HepG2 (cell line): ENCODE measurements at regions of chr22 and their contacts with region 1.

Region 1: DNA sequence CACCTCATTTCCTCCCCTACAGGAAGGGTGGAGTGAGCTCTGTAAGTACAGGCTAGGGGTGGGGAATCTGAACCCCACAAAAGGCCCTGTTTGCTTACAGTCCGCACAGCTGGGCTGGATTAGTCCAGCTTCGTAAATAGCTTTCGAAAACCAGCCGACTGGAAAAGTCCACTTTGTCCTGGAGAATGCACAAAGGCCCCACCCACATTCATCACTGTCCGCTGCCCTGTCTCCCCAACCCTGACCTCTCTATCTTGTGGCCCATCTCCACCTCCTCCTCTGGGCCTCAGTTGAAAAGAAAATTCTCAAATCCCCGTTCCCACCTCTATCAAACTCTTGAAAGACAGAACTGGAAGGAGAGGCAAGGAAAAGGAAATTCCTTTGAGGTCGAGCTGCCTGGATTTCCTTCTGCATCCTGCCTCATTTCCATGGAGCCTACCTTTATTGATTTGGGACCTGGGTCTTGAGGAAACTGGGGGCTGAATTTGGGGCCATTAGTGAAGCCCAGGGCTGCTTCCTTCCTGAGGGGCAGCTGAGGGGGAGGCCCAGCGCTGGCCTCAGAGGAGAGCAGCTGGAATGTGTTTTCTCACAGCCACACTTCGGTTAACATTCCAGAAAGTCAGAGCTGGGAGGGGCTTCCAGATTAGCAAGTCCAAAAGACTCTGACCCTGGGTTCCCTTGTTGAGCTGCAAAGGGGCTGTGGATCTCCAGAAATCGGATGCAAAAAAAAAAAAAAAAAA is 147.6 kb downstream of the FBXO7 start:
- DNase-seq: peak; percentile 89
- ATAC-seq: peak; percentile 80
- H3K4me3 ChIP-seq: peak overlapping the region; percentile 43 to 60 (median 50)
- H3K27ac ChIP-seq: peak overlapping the region; percentile 92
- H3K4me1 ChIP-seq: peaks cover 99% of the 10 kb centered on the region
- H3K27me3 ChIP-seq: no peaks in the 10 kb centered on the region
- CTCF ChIP-seq: no peak
- EP300 ChIP-seq: peak in 1 of 2 experiments; percentile 71; a peak in 2 of 4 replicates
- POLR2A ChIP-seq: peak in 1 of 2 experiments; percentile 49; a peak in 1 of 4 replicates
- RAD21 ChIP-seq: no peak

Region 2: GRCh38 chr22:32534252-32535240 is 87.6 kb before region 1 on chr22:
- CTCF ChIA-PET with region 1: no interaction called
- POLR2A ChIA-PET with region 1: interaction called, 145 read pairs
- in situ Hi-C with region 1: loop called (anchors 5 kb)
- intact Hi-C with region 1: loop called (anchors 2 kb)
- DNase-seq: peak; percentile 87
- ATAC-seq: peak; percentile 37
- H3K4me3 ChIP-seq: peak overlapping the region; percentile 31 to 72 (median 40); a peak in 5 of 6 replicates
- H3K27ac ChIP-seq: peak overlapping the region; percentile 78
- H3K4me1 ChIP-seq: peaks cover 91% of the 10 kb centered on the region
- H3K27me3 ChIP-seq: no peaks in the 10 kb centered on the region
- CTCF ChIP-seq: peak; percentile 34; the same call in 1 of the 2 replicates
- EP300 ChIP-seq: peak in 1 of 2 experiments; percentile 66; a peak in 1 of 4 replicates
- POLR2A ChIP-seq: peak in 1 of 2 experiments; percentile 55; a peak in 2 of 4 replicates
- RAD21 ChIP-seq: no peak

Region 3: DNA sequence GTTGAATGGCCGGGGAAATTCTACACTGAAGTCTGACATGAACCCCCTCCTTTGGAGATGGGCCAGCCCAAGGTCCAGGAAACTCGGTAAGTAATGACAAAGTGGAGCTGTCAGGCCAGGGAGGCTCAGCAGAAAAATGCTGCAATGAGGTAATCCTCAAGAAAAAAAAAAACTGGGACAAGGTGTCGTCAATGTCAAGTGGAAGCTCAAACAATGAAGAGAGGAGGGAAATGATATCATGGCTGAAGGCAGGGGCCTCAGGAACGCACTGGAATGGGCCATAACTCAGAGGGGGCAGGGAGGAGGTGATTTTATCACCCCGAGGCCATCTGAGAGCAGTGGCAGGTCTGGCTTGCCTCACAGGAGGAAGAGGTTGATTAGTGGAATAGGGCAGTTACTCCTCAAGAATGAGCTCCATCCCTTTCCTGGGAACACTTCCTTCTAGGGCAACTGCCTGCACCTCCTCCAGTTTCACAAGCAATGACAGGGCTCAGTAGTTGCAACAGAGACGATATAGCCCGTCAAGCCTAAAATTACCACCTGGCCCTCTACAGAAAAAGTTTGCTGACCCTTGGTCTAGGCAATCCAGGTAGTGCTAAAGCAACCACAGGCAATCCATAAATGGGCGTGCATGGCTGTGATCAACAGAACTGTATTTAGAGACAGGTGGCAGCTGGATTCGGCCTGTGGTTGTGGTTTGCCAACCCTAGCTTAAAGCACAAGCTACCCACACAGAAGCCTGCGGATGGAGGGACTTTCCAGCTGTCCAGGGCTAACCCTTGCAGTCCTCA is 82.3 kb before region 1 on chr22:
- CTCF ChIA-PET with region 1: no interaction called
- POLR2A ChIA-PET with region 1: interaction called, 145 read pairs
- in situ Hi-C with region 1: loop called (anchors 5 kb)
- intact Hi-C with region 1: loop called (anchors 2 kb)
- DNase-seq: no peak
- ATAC-seq: peak; percentile 46
- H3K4me3 ChIP-seq: no peak overlapping the region
- H3K27ac ChIP-seq: no peak overlapping the region
- H3K4me1 ChIP-seq: peaks cover 50% of the 10 kb centered on the region
- H3K27me3 ChIP-seq: no peaks in the 10 kb centered on the region
- CTCF ChIP-seq: no peak
- EP300 ChIP-seq: no peak
- POLR2A ChIP-seq: no peak
- RAD21 ChIP-seq: no peak

Region 4: DNA sequence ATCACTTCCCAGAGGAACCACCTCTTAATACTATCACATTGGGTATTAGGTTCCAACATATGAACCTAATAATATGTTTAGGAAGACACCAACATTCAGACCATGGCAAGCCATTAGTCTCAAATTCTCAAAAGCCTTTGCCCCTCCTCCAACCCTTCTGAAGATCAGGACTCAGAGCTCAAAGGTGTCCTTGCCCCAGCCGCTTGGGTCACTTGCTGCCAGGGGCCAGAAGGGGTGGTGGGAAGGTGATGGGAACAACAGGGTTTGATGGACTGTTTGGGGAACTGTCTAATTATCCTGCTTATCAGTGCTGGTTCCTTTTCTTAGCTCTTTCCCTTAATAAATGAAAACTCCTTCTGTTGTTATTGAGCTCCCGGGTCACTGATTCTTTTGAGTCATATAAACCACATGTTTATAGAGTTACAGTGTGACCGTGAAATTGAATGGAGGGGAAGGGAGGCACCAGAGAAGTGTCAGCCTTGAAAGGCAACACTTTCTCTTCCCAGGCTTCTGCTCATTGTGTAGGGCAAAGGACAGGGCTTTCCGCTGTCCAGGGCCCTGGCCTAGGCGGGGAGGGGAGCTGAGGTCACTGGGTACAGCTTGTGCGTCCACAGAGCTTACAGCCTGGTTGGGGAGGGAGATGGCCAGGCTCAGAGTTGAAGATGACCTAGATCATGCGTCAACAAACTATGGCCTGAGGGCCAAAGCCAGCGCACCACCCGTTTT is 42.5 kb before region 1 on chr22:
- CTCF ChIA-PET with region 1: no interaction called
- POLR2A ChIA-PET with region 1: interaction called, 33 read pairs
- in situ Hi-C with region 1: no loop called
- intact Hi-C with region 1: no loop called
- DNase-seq: peak; percentile 50
- ATAC-seq: peak; percentile 85
- H3K4me3 ChIP-seq: no peak overlapping the region
- H3K27ac ChIP-seq: peak overlapping the region; percentile 43
- H3K4me1 ChIP-seq: peaks cover 62% of the 10 kb centered on the region
- H3K27me3 ChIP-seq: no peaks in the 10 kb centered on the region
- CTCF ChIP-seq: no peak
- EP300 ChIP-seq: 0 out of 4 replicates have a peak, but pooled peaks of 1 of the 2 experiments have one; percentile 20
- POLR2A ChIP-seq: no peak
- RAD21 ChIP-seq: no peak

Region 5: DNA sequence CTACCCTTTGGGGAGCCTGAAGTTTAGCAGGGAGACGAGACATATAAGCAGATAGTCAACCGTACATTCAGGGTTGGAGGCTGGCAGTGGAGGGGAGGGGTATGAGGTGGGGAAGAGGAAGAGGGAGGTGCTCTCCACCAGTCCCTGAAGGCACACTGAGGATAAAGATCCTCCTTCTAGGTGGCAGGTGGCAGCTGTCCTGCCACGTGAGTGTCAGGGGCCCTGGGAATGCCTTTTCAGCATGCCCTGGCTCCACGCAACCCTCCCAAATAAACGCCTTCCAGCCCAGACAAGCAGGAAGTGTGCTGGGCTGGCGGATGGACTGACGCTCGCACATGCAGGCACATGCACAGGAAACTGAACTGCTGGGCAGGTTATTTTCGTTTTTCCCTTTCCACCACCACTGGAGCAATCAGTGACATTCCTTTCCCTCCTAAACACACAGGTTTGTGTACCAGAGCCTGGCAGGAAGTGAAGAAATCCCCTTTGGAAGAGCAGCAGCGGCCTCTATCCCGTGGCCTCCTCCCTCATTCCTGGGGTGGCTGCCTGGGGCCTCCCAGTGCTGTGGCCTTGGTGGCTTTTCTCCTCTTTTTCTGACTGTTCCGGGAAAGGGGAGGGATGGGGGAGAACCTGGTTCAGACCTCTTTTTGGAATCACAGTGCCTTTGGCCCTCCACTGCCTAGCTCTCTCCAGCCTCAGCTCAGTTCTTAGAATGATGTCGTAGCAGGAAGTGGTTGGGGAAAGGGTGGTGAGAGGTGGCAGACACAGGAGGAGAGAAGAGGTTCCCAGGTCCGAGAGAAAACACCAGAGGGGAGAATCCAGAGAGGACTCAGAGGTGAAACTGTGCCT is 22.3 kb after region 1 on chr22:
- CTCF ChIA-PET with region 1: no interaction called
- POLR2A ChIA-PET with region 1: interaction called, 11 read pairs
- in situ Hi-C with region 1: no loop called
- intact Hi-C with region 1: no loop called
- DNase-seq: peak; percentile 98
- ATAC-seq: peak; percentile 98
- H3K4me3 ChIP-seq: peak overlapping the region in 2 of 3 experiments; percentile 37 to 61; a peak in 5 of 6 replicates
- H3K27ac ChIP-seq: peak overlapping the region; percentile 94
- H3K4me1 ChIP-seq: peaks cover 30% of the 10 kb centered on the region
- H3K27me3 ChIP-seq: no peaks in the 10 kb centered on the region
- CTCF ChIP-seq: peak; percentile 74
- EP300 ChIP-seq: peak in 1 of 2 experiments; percentile 90; a peak in 2 of 4 replicates
- POLR2A ChIP-seq: peak; percentile 71 to 73
- RAD21 ChIP-seq: peak; percentile 52; the same call in 1 of the 2 replicates

Region 6: DNA sequence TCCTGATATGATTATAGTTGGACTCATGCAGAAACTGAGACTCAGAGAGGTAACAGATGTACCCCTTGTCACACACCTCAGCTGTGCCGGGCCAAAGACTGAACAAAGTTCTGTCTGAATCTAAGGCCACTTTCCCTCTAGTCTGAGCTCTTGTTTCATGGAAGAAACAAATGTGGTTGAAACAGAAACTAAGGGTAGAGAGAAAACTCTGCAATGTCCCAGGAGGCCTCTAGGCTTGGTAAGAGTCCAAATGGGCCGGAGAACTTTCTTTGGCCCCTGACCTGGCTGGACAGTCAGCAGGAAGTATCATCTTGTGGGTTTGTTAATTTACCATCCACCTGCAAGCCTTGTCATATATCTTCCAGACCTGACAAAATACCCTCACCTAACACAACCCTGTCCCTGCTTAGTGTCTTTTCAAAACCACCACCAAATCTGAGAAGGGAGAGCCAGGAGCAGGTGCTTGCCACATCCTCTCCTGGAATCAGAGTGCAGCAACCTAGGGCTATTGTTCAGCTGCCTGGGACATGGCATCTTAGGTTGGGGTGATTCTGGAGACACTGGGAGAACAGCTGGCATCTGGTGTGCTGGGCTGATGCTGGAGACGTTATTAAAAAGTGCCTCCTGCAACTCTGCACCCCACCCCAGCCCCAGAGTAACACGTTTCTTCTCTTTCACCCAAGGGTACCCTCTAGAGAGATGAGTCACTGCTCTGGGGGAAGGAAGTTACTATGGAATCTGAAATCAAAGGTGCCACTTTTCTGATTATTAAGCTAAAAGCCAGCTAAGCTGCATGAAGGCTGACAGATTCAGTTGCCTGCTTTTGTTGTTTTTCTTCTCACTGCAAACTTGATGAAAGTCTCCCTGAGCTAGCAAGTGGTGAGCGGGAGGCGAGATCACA is 53.0 kb after region 1 on chr22:
- CTCF ChIA-PET with region 1: no interaction called
- POLR2A ChIA-PET with region 1: no interaction called
- in situ Hi-C with region 1: no loop called
- intact Hi-C with region 1: no loop called
- DNase-seq: no peak
- ATAC-seq: no peak
- H3K4me3 ChIP-seq: no peak overlapping the region
- H3K27ac ChIP-seq: no peak overlapping the region
- H3K4me1 ChIP-seq: peaks cover 34% of the 10 kb centered on the region
- H3K27me3 ChIP-seq: no peaks in the 10 kb centered on the region
- CTCF ChIP-seq: no peak
- EP300 ChIP-seq: no peak
- POLR2A ChIP-seq: no peak
- RAD21 ChIP-seq: no peak